ENCODE measurements at regions of chr22 and their contacts with region 1.

Region 1: DNA sequence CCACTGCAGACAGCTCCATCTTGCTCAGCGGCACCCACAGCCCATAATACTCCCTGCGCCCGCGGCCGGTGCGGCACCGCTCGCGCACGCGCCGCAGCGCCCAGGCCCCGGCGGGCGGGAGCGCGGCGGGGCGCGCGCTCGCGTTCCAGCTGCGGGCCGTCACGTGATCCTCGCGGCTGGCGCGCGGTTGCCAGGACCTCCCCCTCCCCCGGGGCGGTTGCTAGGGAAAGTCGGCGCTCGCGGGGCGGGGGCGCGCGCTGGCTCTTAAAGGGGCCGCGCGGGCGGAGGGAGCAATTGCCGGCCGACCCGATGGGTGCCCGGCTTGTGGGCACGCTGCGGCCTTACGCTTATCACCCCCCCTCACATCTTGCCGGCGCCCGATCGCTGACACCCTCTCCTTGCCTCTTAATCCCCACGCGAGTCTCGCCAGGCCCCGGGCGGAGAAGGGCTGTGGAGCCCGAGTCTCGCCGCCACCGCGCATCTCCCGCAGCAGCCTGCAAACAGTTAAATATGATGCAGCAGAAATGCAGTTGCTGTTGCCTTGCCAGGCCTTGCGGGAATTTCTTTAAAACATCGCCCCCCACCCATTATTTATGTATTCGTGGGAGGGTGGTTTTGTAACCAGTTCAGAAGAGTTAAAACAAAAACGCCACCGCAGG is at the start of gene CBX6:
- DNase-seq: peak; percentile 99
- H3K4me3 Mint-ChIP-seq: peak within 1 kb of the TSS; percentile 95
- H3K27ac Mint-ChIP-seq: peak within 1 kb of the TSS; percentile 94
- H3K4me1 Mint-ChIP-seq: peaks cover 53% of the 10 kb centered on the region
- H3K27me3 Mint-ChIP-seq: peaks cover 9% of the 10 kb centered on the region
- total RNA-seq, gene CBX6: 178 and 180 TPM in 2 replicates

Region 2: GRCh38 chr22:38941488-38941987 is 69.2 kb after region 1 on chr22:
- intact Hi-C with region 1: loop called (anchors 1 kb)
- DNase-seq: peak; percentile 82
- H3K4me3 Mint-ChIP-seq: peak overlapping the region; percentile 75
- H3K27ac Mint-ChIP-seq: peak overlapping the region; percentile 92
- H3K4me1 Mint-ChIP-seq: peaks cover 47% of the 10 kb centered on the region
- H3K27me3 Mint-ChIP-seq: peaks cover 25% of the 10 kb centered on the region

Region 3: DNA sequence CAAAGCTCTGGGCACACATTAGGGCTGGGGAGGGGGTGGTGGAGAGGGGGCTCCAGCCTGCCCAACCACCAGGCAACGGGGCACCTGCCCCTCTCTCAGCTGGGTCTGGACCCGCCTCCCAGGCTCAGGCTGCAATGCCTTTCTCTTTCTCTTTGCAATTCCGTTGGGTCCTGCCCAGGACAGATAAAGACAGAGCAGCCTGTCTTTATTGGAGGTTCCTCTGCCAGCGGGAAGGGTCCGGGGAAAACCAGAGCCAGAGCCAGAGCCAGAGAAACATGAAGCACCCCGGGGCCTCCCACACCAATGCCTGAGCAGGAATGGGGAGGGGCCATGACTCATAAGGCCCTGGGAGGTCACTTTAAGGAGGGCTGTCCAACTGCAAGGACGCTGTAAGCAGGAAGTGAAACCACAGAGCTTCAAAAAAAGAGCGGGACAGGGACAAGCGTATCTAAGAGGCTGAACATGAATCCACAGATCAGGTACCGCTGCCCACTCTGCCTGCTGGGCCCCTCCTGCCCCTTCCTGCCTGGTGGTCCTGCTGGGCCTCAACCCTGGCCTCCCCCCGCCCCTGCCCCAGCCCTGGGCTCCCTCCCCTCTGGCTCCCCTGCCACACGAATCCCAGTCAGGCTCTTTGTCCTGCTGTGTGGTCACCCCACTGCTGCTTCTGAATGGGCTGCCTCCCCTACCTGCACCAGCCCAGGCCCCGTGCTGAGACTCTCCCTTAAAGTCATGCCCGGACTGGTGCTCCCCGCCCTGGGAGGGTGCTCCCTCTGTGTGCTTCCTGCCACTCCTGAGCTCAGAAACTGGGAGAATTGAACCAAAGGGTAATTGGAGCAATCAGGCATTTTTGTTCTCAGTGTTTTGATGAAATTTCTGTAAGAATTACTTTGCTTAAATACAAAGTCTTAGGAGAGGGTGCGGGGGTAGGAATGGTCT is 110.0 kb after region 1 on chr22 and contains the start of gene APOBEC3B:
- intact Hi-C with region 1: loop called (anchors 1 kb)
- DNase-seq: peak; percentile 94
- H3K4me3 Mint-ChIP-seq: peak within 1 kb of the TSS; percentile 77
- H3K27ac Mint-ChIP-seq: peak within 1 kb of the TSS; percentile 90
- H3K4me1 Mint-ChIP-seq: peaks cover 50% of the 10 kb centered on the region
- H3K27me3 Mint-ChIP-seq: peaks cover 2% of the 10 kb centered on the region
- total RNA-seq, gene APOBEC3B: 25.4 and 26.1 TPM in 2 replicates

Region 4: GRCh38 chr22:39090426-39091064 is 218.2 kb after region 1 on chr22:
- intact Hi-C with region 1: loop called (anchors 2 kb)
- DNase-seq: peak; percentile 94
- H3K4me3 Mint-ChIP-seq: peak overlapping the region; percentile 66
- H3K27ac Mint-ChIP-seq: peak overlapping the region; percentile 96
- H3K4me1 Mint-ChIP-seq: peaks cover 78% of the 10 kb centered on the region
- H3K27me3 Mint-ChIP-seq: no peaks in the 10 kb centered on the region

Region 5: DNA sequence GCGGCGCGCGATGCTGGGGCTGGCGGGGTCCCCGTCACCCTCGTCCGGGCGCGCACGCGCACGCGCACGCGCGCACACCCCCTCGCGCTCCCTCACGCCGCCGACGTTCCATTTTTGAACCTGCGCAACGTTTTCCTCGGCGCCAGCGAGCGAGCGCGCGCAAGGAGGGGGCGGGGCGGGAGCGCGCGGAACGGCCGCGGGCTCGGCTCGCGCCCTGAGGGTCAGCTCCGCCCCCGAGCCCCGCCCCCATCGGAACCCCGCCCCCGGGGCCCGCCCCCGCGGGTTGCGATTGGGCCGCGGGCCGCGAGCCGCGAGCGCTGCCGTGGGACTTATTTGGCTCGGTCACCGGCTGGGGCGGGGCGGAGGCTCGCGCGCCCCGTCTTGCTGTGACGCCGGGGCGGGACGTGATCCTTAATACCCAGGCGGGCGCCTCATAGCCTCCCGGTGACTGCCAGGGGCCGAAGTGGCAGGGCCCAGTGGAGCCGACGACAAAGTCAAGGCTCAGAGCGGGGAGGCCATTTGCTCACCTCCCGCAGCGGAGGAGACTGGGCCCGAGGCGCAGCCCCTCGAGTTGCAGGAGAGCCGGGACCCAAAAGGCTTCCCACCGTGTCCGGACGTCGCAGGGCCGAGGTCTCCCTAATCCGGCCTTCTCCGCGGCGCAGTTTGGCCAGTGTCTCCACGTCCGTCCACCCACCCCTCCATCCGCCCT is 280.4 kb after region 1 on chr22 and contains the start of gene CBX7:
- intact Hi-C with region 1: loop called (anchors 2 kb)
- DNase-seq: peak; percentile 98
- H3K4me3 Mint-ChIP-seq: peak within 1 kb of the TSS; percentile 92
- H3K27ac Mint-ChIP-seq: peak within 1 kb of the TSS; percentile 83
- H3K4me1 Mint-ChIP-seq: peaks cover 32% of the 10 kb centered on the region
- H3K27me3 Mint-ChIP-seq: peaks cover 29% of the 10 kb centered on the region
- total RNA-seq, gene CBX7: 10.8 and 11.6 TPM in 2 replicates